ENCODE measurements at regions of chr21 and their contacts with region 1.

Region 1: GRCh38 chr21:39137248-39138178 is 45.7 kb downstream of the PSMG1 start:
- DNase-seq: peak in 1 of 42 donors; percentile 41

Region 2: GRCh38 chr21:38505654-38506515 is 631.6 kb before region 1 on chr21:
- intact Hi-C with region 1: loop called (anchors 10 kb)
- DNase-seq: peak in 22 of 42 donors; percentile 10 to 76 (median 40)

Region 3: DNA sequence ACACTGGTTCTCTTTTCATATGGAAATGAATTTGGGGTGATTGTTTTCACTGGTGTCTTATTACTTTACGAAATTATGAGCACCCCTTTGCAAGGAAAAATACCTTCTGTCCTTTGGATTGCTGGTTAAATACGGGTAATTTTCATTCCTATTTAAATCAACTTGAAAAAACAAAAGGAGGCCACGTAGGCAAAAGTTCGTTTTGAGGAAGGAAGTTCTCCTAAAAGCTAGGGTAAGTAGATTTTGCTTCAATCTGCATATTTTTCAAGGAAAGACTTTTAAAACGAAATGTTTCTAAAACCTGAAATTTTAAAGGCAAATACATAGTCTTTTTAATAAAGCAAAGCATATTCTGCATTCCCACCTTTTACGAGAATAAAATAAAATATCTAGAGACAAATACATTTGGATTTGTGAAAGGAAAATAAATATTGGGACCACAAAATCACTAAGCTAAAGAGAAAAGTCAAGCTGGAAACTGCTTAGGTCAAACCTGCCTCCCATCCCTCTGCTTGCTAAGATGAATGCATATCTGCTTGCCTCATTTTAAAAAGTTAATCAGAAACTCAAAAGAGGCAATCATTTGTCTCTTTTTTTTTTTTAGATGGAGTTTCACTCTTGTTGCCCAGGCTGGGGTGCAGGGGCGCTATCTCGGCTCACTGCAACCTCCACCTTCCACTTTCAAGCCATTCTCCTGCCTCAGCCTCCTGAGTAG is 402.7 kb before region 1 on chr21:
- intact Hi-C with region 1: loop called (anchors 5 kb)
- DNase-seq: no peak

Region 4: GRCh38 chr21:39363607-39364555 is 226.4 kb after region 1 on chr21:
- intact Hi-C with region 1: no loop called
- DNase-seq: no peak

Region 5: GRCh38 chr21:39601187-39601928 is 463.8 kb after region 1 on chr21:
- intact Hi-C with region 1: no loop called
- DNase-seq: no peak

Measured in head of caudate nucleus (tissue), 42 donors.